ENCODE measurements at regions of chr6 and their contacts with region 1.

Region 1: GRCh38 chr6:108492131-108492766 is 68.5 kb upstream of the FOXO3 start:
- H3K4me3 ChIP-seq: no peak overlapping the region
- H3K27ac ChIP-seq: no peak overlapping the region
- H3K4me1 ChIP-seq: no peaks in the 10 kb centered on the region
- CTCF ChIP-seq: no peak; the same call in 1 of the 2 replicates

Region 2: DNA sequence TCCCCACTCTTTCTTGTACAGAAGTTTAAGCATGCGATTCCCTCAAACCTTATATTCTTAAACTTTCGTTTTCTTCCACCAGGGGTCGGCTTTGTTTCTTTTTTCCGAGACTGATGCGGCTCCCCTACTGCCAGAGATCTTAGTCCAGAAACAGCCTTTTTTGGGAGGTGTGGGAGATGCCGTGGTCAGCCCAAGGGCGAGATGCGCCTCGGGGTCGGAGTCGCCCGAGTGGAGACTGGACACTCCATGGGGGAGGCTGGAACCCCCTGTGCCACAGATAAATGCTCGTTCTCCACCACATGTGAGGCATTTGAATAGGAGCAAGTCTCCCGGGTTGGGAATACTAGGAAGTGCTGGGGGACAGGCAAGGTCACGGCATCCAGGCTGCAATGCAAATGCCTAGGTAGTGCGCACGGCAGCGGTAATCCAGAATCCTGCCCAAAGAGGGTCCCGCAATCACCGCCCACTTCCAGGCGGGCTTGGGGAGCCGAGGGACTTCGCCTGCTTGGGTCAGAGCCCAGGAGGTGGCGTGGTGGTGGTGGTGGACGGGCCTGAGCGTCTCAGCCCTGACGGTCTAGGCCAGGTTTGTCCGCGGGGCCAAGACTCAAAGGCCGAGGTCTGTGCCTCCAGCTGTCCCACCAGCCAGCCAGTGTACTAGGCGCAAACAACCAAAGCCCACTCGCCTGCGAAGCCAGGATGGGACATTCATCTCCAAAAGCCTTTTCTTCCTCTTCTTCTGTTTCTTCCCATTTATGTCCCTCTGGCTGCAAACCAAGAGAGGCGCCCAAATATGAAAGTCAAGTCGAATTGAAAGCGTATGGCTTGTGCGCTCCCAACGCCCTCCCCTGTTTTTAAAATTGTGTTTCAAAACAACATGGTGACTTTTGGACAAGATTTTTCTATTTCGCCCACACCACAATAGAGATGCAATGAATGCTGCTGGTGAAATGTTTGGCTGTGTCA is 378.4 kb before region 1 on chr6:
- CTCF ChIA-PET with region 1: interaction called, 83 read pairs
- POLR2A ChIA-PET with region 1: no interaction called
- H3K4me3 ChIP-seq: no peak overlapping the region
- H3K27ac ChIP-seq: no peak overlapping the region
- H3K4me1 ChIP-seq: no peaks in the 10 kb centered on the region
- CTCF ChIP-seq: peak; percentile 77

Region 3: GRCh38 chr6:108277821-108278220 is 214.4 kb before region 1 on chr6:
- CTCF ChIA-PET with region 1: interaction called, 11 read pairs
- POLR2A ChIA-PET with region 1: no interaction called
- H3K4me3 ChIP-seq: no peak overlapping the region
- H3K27ac ChIP-seq: no peak overlapping the region
- H3K4me1 ChIP-seq: no peaks in the 10 kb centered on the region
- CTCF ChIP-seq: no peak

Region 4: DNA sequence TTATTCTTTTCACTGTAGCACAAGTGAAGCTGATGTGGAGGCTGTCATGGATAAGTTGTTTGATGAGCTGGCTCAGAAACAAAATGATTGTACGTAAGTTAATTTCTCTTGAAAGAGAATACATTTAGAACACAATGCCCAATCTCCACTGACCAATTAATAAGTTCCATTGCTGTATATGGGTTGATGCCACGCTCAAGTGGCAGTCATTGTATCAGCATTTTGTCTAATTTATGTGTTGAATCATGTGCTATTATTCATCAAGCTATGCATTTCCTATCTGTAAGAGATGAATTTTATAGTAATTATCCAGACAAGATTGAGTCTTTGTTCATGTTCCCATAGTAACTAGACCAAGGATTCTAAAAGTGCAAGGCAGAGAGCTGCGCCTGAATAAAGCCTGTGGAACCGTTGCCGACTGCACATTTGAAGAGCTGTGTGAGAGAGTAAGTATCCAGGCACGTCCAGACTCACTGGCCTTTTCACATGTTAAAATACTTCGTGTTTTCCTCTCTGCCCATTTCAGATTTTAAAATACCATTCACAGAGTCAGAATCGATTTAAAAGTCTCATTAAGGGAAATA is 15.3 kb before region 1 on chr6:
- CTCF ChIA-PET with region 1: interaction called, 14 read pairs
- POLR2A ChIA-PET with region 1: no interaction called
- H3K4me3 ChIP-seq: no peak overlapping the region
- H3K27ac ChIP-seq: no peak overlapping the region
- H3K4me1 ChIP-seq: no peaks in the 10 kb centered on the region
- CTCF ChIP-seq: no peak

Region 5: GRCh38 chr6:108518714-108519576 is 26.7 kb after region 1 on chr6:
- CTCF ChIA-PET with region 1: interaction called, 39 read pairs
- POLR2A ChIA-PET with region 1: no interaction called
- H3K4me3 ChIP-seq: no peak overlapping the region
- H3K27ac ChIP-seq: no peak overlapping the region
- H3K4me1 ChIP-seq: no peaks in the 10 kb centered on the region
- CTCF ChIP-seq: no peak; the same call in 1 of the 2 replicates